Activated CD8-positive, alpha-beta T cell treated with anti-CD3 and anti-CD28 coated beads for 36 hours (primary cell): ENCODE measurements at regions of chr6 and their contacts with region 1.

Region 1: DNA sequence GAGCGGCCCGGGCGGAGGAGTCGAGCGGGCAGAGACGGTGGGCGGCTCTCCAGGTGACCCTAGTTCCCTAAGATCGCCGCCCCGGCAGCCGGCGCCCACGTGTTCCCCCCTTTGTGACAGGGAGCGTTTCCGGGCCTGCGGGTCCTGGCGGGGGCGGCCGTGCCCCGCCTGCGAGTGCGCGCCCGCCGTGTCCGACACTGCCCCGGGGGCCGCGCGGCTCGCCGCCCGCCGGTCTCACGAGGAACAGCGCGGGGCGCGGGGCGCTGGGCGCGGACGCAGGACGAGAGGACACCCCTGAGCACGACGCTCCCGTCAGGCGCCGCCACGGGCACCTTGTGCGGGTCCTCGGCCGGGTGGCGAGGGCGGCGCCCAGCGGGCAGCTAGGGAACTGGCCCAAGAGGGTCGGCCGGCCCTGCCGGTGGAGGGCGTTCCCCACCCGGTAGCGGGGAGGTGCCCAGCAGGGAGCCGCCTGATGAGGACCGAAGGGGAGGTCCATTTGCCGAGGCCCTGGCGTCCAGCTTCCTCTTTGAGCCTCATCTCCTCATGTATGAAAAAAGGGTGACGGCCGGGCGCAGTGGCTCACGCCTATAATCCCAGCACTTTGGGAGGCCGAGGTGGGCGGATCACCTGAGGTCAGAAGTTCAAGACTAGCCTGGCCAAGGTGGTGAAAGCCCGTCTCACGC is at the start of gene VARS1:
- DNase-seq: peak; percentile 86
- ATAC-seq: peak; percentile 92
- H3K4me3 Mint-ChIP-seq: peak within 1 kb of the TSS; percentile 92
- H3K27ac Mint-ChIP-seq: peak within 1 kb of the TSS; percentile 97
- H3K4me1 Mint-ChIP-seq: peaks cover 39% of the 10 kb centered on the region
- H3K27me3 Mint-ChIP-seq: no peaks in the 10 kb centered on the region
- CTCF ChIP-seq: peak; percentile 78
- total RNA-seq, gene VARS1: 150 to 153 TPM

Region 2: GRCh38 chr6:31729515-31729978 is 66.2 kb before region 1 on chr6:
- CTCF ChIA-PET with region 1: interaction called, 10 read pairs
- POLR2A ChIA-PET with region 1: interaction called, 24 read pairs
- intact Hi-C with region 1: no loop called
- DNase-seq: peak; percentile 84
- ATAC-seq: peak; percentile 65
- H3K4me3 Mint-ChIP-seq: peak overlapping the region; percentile 76
- H3K27ac Mint-ChIP-seq: peak overlapping the region; percentile 69
- H3K4me1 Mint-ChIP-seq: peaks cover 68% of the 10 kb centered on the region
- H3K27me3 Mint-ChIP-seq: no peaks in the 10 kb centered on the region
- CTCF ChIP-seq: peak; percentile 25

Region 3: DNA sequence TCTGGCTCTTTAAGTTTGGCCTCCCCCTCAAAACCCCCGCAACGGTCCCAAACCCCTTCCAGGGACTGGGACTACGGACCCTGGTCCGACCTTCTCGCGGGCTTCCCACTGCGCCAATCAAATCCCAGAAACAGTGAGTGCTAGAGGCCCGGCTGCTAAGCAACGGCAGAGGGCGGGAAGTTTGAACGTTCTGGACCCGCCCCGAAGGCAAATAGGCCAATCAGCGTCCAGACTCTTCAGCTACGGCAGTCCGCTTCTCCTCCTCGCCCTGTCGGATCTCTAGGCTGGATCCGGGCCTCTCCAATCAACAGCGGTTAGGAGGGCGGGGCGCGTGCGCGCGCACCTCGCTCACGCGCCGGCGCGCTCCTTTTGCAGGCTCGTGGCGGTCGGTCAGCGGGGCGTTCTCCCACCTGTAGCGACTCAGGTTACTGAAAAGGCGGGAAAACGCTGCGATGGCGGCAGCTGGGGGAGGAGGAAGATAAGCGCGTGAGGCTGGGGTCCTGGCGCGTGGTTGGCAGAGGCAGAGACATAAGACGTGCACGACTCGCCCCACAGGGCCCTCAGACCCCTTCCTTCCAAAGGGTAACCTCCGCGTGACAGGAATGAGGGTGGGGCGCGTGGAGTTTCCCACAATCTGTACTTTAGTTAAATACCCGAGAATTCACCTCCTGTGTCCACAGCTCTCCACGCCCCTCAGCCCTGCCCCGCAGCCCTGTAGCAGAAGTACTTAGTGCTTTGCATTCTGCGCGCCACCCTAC is 55.9 kb before region 1 on chr6 and contains the start of gene MSH5:
- CTCF ChIA-PET with region 1: interaction called, 12 read pairs
- POLR2A ChIA-PET with region 1: interaction called, 24 read pairs
- intact Hi-C with region 1: no loop called
- DNase-seq: peak; percentile 99
- ATAC-seq: peak; percentile 83
- H3K4me3 Mint-ChIP-seq: peak within 1 kb of the TSS; percentile 97
- H3K27ac Mint-ChIP-seq: peak within 1 kb of the TSS; percentile 97
- H3K4me1 Mint-ChIP-seq: peaks cover 38% of the 10 kb centered on the region
- H3K27me3 Mint-ChIP-seq: no peaks in the 10 kb centered on the region
- CTCF ChIP-seq: no peak
- total RNA-seq, gene MSH5: 96.9 to 105 TPM

Region 4: DNA sequence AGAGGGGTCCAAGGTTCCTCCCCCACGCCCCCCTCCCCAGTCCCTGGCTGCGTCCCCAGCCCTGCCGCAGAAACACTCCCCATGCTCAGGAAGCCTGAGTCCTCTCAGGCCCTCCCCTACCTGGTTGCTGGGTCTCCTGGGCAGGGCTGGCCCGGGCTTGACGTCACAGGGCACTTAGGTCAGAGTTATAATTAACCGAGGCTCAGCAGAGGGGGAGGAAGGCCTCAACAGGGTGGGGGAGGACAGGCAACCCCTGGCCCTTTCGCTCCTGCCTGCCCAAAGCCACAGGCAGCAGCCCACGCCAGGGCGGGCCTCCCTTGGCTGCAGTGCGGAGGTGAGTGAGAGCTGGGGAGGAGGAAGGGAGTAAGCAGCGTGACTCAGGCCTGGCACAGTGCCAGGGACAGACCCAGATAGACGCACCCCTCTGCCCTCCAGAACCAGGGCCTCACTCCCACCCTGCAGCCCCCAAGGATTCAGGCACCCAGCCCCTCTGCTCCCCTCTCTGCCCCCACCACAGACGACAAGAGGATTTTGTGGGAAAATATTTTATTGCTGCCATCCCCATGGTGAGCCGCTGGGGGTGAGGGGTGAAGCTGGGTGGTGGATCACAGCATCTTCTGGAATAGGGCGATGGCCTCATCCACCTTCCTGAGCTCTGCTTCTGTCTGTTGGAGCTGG is 18.6 kb before region 1 on chr6 and contains the start of gene VWA7:
- CTCF ChIA-PET with region 1: interaction called, 34 read pairs
- POLR2A ChIA-PET with region 1: interaction called, 5 read pairs
- intact Hi-C with region 1: no loop called
- DNase-seq: peak; percentile 95
- ATAC-seq: peak; percentile 96
- H3K4me3 Mint-ChIP-seq: peak within 1 kb of the TSS; percentile 15
- H3K27ac Mint-ChIP-seq: peak within 1 kb of the TSS; percentile 73
- H3K4me1 Mint-ChIP-seq: peaks cover 36% of the 10 kb centered on the region
- H3K27me3 Mint-ChIP-seq: no peaks in the 10 kb centered on the region
- CTCF ChIP-seq: no peak
- total RNA-seq, gene VWA7: 1.6 TPM

Region 5: DNA sequence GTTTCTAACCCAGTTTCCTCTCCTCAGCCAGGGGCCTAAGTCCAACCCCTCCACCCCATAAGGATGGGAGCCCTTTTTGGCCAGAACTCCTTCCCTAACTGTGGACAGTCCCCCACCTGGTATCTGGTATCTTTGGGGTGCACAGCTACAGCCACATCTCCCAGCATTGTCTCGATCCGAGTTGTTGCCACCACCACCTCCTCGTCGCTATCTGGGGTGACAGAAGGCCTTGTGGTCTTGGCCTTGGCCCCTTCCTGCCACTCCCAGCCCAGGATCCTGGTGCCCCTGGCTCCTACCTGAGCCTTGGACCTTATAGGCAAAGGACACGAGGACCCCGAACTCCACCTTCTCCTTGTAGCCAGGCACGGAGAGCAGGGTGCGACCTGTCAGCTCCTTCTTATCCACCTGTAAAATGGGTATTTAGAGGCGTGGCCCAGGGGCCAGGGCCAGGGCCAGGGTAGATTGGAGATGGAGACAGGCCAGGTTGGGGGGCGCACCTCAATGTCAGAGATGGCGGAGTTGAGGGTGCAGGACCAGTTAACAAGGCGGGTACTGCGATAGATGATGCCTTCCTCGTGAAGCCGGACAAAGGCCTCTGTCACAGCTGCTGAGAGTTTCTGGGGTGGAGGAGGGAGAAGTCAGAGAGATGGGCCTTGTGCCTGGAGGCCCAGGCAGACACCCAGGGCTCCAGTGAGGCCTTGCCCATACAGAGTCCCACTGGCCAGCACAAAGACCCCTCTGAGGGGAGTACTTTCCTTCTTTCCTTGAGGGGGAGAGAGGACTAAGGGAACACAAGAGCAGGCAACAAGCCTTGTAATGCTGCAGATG is 11.4 kb before region 1 on chr6:
- CTCF ChIA-PET with region 1: interaction called, 34 read pairs
- POLR2A ChIA-PET with region 1: interaction called, 7 read pairs
- intact Hi-C with region 1: no loop called
- DNase-seq: no peak
- ATAC-seq: no peak
- H3K4me3 Mint-ChIP-seq: no peak overlapping the region
- H3K27ac Mint-ChIP-seq: no peak overlapping the region
- H3K4me1 Mint-ChIP-seq: no peaks in the 10 kb centered on the region
- H3K27me3 Mint-ChIP-seq: no peaks in the 10 kb centered on the region
- CTCF ChIP-seq: no peak

Region 6: GRCh38 chr6:31806465-31807272 is 10.9 kb after region 1 on chr6 and contains the start of gene LSM2:
- CTCF ChIA-PET with region 1: interaction called, 28 read pairs
- POLR2A ChIA-PET with region 1: interaction called, 16 read pairs
- intact Hi-C with region 1: no loop called
- DNase-seq: peak; percentile 98
- ATAC-seq: peak; percentile 98
- H3K4me3 Mint-ChIP-seq: peak within 1 kb of the TSS; percentile 98
- H3K27ac Mint-ChIP-seq: peak within 1 kb of the TSS; percentile 97
- H3K4me1 Mint-ChIP-seq: peaks cover 19% of the 10 kb centered on the region
- H3K27me3 Mint-ChIP-seq: no peaks in the 10 kb centered on the region
- CTCF ChIP-seq: no peak
- total RNA-seq, gene LSM2: 117 to 120 TPM

Region 7: DNA sequence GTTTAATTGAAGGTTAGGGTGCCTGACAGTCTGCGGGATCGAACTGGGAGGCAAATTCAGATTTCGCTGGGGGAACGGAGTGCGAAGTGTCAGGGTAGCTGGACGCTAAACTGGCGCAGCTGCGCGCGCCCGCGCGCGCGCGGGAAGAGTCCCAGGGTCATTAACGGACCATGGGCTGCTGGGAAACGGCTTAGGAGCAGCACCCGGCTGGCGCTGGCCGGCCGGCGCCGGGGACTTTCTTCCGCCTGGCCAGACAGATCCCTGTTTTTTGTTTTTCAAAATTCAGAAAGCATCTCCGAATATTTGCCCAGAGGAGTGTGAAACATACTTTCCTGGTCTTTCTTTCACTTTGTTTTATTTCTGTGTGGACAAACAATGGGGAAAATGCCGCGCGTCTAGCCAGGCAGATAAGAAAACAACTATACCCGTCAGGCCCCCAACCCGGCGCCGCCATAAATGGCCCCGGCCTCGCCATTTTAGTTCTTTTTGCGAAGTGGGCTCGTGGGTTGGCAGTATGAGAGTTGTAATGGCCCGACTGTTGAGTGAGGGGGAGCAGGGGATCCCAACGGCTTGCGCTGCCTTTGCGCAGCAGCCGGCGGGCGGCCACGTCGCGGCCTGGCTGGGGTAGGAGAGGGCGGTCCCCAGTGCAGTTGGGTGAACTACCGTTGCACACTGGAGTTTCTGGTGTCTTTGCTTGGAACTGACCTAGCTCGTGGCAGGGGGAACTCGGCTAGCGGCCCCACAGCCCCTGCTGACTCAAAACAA is 38.9 kb after region 1 on chr6:
- CTCF ChIA-PET with region 1: interaction called, 9 read pairs
- POLR2A ChIA-PET with region 1: interaction called, 12 read pairs
- intact Hi-C with region 1: no loop called
- DNase-seq: peak; percentile 84
- ATAC-seq: peak; percentile 70
- H3K4me3 Mint-ChIP-seq: peak overlapping the region; percentile 92
- H3K27ac Mint-ChIP-seq: peak overlapping the region; percentile 95
- H3K4me1 Mint-ChIP-seq: peaks cover 30% of the 10 kb centered on the region
- H3K27me3 Mint-ChIP-seq: no peaks in the 10 kb centered on the region
- CTCF ChIP-seq: no peak

Region 8: DNA sequence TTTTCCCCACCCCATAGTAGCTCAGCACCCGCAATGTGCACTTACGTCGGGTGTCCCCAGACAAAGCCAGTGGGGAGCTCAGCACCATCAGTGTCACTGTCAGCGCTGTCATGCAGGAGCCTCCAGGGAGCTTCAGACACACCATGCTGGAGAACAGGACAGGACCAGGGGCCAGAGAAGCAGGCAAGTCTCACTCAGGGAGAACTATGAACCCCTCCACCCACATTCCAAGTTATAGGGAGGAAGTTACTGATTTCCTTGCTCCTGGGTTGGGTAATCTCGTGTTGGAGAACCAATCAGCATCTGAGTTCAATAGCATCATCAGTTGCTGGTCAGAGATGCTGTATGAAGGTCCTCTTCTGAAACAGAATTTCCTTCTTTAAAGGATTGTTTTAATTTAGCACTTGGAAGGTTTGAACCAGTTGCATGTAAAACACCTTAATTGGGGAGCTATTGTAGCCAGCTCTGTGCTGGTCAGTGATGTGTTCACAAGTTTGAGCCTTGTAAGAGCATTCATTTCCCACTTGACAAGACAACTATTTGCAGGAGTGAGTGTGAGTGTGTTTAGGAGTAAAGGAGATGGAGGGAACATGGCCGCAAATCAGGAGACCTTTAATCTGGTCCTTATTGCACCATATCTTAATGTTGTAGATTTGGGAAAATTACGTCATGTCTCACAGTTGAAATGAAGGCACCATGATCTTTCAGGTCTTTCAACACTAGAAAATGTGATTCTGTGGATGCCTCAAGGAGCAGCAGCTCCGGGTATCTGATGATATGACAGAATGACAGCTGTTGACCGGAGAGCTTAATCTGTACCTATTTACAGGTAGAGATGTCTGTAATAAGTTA is 794.1 kb after region 1 on chr6 and contains the start of gene HLA-DRB1:
- CTCF ChIA-PET with region 1: no interaction called
- POLR2A ChIA-PET with region 1: no interaction called
- intact Hi-C with region 1: no loop called
- DNase-seq: peak; percentile 15
- ATAC-seq: peak; percentile 90
- H3K4me3 Mint-ChIP-seq: peak within 1 kb of the TSS; percentile 67
- H3K27ac Mint-ChIP-seq: peak within 1 kb of the TSS; percentile 69
- H3K4me1 Mint-ChIP-seq: peaks cover 6% of the 10 kb centered on the region
- H3K27me3 Mint-ChIP-seq: no peaks in the 10 kb centered on the region
- CTCF ChIP-seq: no peak
- total RNA-seq, gene HLA-DRB1: 21.8 to 22.7 TPM